Tibial artery (tissue), 4 donors: ENCODE measurements at regions of chr9 and their contacts with region 1.

Region 1: GRCh38 chr9:129495534-129496325 is 125.2 kb downstream of the C9orf50 start:
- DNase-seq: peak; percentile 92 to 96
- H3K4me3 ChIP-seq: peak overlapping the region; percentile 62 to 73
- H3K27ac ChIP-seq: peak overlapping the region; percentile 100
- H3K4me1 ChIP-seq: peaks cover 10 to 91% (median 87%) of the 10 kb centered on the region in 4 donors
- H3K27me3 ChIP-seq: no peaks in the 10 kb centered on the region
- CTCF ChIP-seq: peak in 1 of 2 experiments; percentile 23

Region 2: GRCh38 chr9:129333953-129334724 is 161.6 kb before region 1 on chr9:
- intact Hi-C with region 1: loop called (anchors 5 kb)
- DNase-seq: peak; percentile 93 to 96
- H3K4me3 ChIP-seq: peak overlapping the region in 1 of 2 donors; percentile 28
- H3K27ac ChIP-seq: peak overlapping the region; percentile 87 to 92
- H3K4me1 ChIP-seq: peaks cover 16 to 83% (median 55%) of the 10 kb centered on the region in 4 donors
- H3K27me3 ChIP-seq: no peaks in the 10 kb centered on the region
- CTCF ChIP-seq: peak in 1 of 2 experiments; percentile 15